ENCODE measurements at regions of chr15 and their contacts with region 1.

Region 1: DNA sequence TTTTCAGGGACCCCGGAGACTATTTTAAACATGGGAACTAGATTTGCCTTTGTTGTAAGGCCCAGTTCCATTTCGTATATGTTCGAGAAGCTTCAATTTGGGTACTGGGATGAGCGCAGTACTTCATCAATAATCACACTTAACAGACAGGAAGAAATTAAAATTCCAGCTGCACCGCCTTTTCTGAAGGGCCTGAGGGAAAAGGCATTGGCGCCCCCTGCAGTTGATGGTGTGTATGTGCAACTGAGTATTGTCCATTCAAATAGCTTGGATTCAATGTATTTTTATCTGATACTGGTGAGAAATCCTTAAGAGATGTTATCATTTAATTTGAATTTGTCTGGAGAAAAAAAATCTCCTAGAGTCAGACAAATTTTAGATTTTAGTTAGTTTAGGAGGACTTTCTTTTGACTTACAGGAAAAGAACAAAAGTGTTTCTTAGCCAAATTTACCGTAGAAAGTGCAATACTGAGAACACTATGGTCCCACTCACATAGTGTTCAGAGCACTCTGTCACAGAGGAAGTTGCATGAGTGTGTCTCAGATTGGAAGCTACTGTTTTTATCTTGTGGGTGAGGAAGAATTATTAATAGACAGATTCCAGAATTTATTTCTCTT is 5.4 kb upstream of the ALDH1A2 start:
- DNase-seq: peak; percentile 53 to 55
- ATAC-seq: peak in 1 of 8 donors; percentile 51
- H3K4me3 ChIP-seq: no peak overlapping the region
- H3K27ac ChIP-seq: no peak overlapping the region
- H3K4me1 ChIP-seq: peaks cover 0 to 9% (median 4%) of the 10 kb centered on the region in 9 donors
- H3K27me3 ChIP-seq: peaks cover 0 to 81% (median 15%) of the 10 kb centered on the region in 7 donors
- CTCF ChIP-seq: peak; percentile 86 to 98 (median 95)

Region 2: GRCh38 chr15:57364282-57365007 is 706.5 kb before region 1 on chr15:
- intact Hi-C with region 1: loop called in 1 of 10 experiments (anchors 10 kb)
- DNase-seq: no peak
- ATAC-seq: peak in 4 of 8 donors; percentile 37 to 53 (median 47)
- H3K4me3 ChIP-seq: no peak overlapping the region
- H3K27ac ChIP-seq: no peak overlapping the region
- H3K4me1 ChIP-seq: peaks cover 0 to 5% (median 0%) of the 10 kb centered on the region in 9 donors
- H3K27me3 ChIP-seq: no peaks in the 10 kb centered on the region
- CTCF ChIP-seq: peak in 5 of 9 donors; percentile 6 to 28 (median 19)

Region 3: GRCh38 chr15:57732526-57733331 is 338.2 kb before region 1 on chr15:
- intact Hi-C with region 1: loop called in 2 of 10 experiments (anchors 5 to 10 kb)
- DNase-seq: peak in 1 of 2 donors; percentile 45
- ATAC-seq: peak in 6 of 8 donors; percentile 46 to 74 (median 64)
- H3K4me3 ChIP-seq: no peak overlapping the region
- H3K27ac ChIP-seq: no peak overlapping the region
- H3K4me1 ChIP-seq: peaks cover 0 to 19% (median 6%) of the 10 kb centered on the region in 9 donors
- H3K27me3 ChIP-seq: no peaks in the 10 kb centered on the region
- CTCF ChIP-seq: peak; percentile 68 to 94 (median 87)

Region 4: GRCh38 chr15:57861036-57861638 is 209.8 kb before region 1 on chr15:
- intact Hi-C with region 1: loop called in 9 of 10 experiments (anchors 1 to 10 kb)
- DNase-seq: peak in 1 of 2 donors; percentile 36
- ATAC-seq: peak in 6 of 8 donors; percentile 31 to 57 (median 48)
- H3K4me3 ChIP-seq: no peak overlapping the region
- H3K27ac ChIP-seq: no peak overlapping the region
- H3K4me1 ChIP-seq: peaks cover 0 to 9% (median 6%) of the 10 kb centered on the region in 9 donors
- H3K27me3 ChIP-seq: no peaks in the 10 kb centered on the region
- CTCF ChIP-seq: peak; percentile 76 to 91 (median 85)

Region 5: DNA sequence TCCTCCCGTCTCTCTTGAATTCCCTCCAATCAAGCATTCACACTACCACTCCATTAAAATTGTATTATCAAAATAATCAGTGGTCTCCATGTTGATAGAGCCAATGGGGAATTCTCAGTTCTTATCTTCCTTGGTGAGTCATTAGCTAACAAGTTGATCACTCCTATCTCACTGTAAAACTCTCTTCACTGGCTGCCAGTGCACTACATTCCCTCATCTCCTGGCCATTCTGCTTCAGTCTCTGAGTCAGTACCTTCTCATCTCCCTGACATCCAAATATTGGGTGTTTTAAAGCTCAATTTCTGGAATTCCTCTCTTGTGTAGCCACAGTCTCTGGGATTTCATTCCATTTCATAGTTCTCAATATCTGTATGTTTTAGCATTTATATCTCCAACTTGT is 180.6 kb before region 1 on chr15:
- intact Hi-C with region 1: no loop called
- DNase-seq: no peak
- ATAC-seq: no peak
- H3K4me3 ChIP-seq: no peak overlapping the region
- H3K27ac ChIP-seq: no peak overlapping the region
- H3K4me1 ChIP-seq: no peaks in the 10 kb centered on the region
- H3K27me3 ChIP-seq: peaks cover 0 to 6% (median 0%) of the 10 kb centered on the region in 7 donors
- CTCF ChIP-seq: no peak

Region 6: DNA sequence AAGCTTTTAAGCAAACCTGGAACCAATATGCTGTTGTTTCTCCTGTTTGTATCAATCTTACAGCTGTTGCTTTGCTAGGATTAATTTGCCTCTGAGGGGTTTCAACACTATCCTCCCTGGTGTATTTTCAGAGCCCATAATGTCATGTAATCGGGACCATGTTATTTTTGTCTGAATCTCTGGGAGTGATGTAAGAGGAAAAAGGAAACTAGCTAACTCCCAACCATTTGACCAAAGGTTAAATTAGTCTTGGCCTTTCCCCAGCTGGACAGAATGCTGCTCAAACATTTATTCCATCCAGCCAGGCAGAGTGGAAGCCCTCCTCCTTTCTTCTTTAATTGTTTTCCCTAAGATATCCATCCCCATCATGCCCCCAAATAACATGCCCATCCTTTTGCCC is 147.6 kb before region 1 on chr15:
- intact Hi-C with region 1: loop called in 2 of 10 experiments (anchors 10 kb)
- DNase-seq: peak in 1 of 2 donors; percentile 77
- ATAC-seq: peak; percentile 78 to 92 (median 86)
- H3K4me3 ChIP-seq: peak overlapping the region in 2 of 10 donors; percentile 10 to 11
- H3K27ac ChIP-seq: peak overlapping the region; percentile 27 to 87 (median 76)
- H3K4me1 ChIP-seq: peaks cover 8 to 57% (median 42%) of the 10 kb centered on the region in 9 donors
- H3K27me3 ChIP-seq: no peaks in the 10 kb centered on the region
- CTCF ChIP-seq: no peak

Region 7: DNA sequence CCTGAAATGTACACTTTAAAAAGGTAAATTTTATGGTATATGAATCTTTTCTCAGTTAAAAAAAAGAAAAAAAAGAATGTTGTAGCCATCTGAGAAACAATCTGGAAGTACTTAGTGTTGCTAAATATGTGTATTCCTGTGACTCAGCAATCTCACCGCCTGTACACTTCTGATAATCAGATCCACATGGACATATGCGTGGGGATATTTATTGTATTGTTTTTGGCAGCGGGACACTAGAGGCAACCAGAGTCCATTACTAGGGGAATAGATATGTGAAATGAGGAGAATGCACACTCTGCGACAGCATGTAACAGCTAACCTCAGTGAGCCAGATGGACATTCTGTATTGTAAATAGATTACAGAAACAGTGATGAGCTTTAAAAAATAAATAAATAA is 132.6 kb after region 1 on chr15:
- intact Hi-C with region 1: no loop called
- DNase-seq: no peak
- ATAC-seq: peak in 2 of 8 donors; percentile 44 to 64
- H3K4me3 ChIP-seq: no peak overlapping the region
- H3K27ac ChIP-seq: no peak overlapping the region
- H3K4me1 ChIP-seq: peaks cover 0 to 21% (median 0%) of the 10 kb centered on the region in 9 donors
- H3K27me3 ChIP-seq: no peaks in the 10 kb centered on the region
- CTCF ChIP-seq: no peak

Measured in heart right ventricle (tissue), 16 donors.